ENCODE measurements at regions of chr3 and their contacts with region 1.

Region 1: GRCh38 chr3:47164007-47164881 is at the start of gene SETD2:
- DNase-seq: peak; percentile 43
- ATAC-seq: peak; percentile 93
- H3K4me3 ChIP-seq: peak within 1 kb of the TSS; percentile 83
- H3K27ac ChIP-seq: peak within 1 kb of the TSS; percentile 74
- H3K4me1 ChIP-seq: peaks cover 22% of the 10 kb centered on the region
- H3K27me3 ChIP-seq: no peaks in the 10 kb centered on the region
- CTCF ChIP-seq: peak; percentile 54 to 75 (median 59); a peak in 4 of 6 replicates
- EP300 ChIP-seq: no peak
- POLR2A ChIP-seq: peak; percentile 69
- RAD21 ChIP-seq: peak; percentile 82
- polyA plus RNA-seq, gene SETD2: 8.4 to 8.5 TPM

Region 2: DNA sequence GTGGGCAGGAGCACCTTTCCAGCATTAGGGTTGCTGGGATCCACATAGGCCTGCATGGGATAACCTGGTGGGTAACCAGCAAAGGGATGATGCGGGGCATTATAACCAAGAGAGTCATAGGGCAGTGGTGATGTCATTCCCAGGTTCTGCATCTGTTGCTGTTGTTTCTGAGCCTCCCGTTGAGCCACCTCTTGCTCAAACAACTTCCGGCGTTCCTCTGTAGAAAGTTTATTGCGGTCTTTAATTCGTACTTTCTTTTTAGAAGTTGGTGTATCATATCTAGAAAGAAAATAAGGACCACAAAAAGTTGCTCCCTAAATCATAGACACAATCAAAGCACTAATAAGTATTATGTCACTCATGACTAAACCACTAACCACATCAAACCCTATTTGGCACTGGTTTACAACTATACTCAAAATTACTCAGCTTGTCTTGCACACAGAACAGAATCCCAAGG is 107.0 kb before region 1 on chr3:
- CTCF ChIA-PET with region 1: no interaction called
- POLR2A ChIA-PET with region 1: no interaction called
- RAD21 ChIA-PET with region 1: no interaction called
- SMC1A ChIA-PET with region 1: no interaction called
- in situ Hi-C with region 1: no loop called
- intact Hi-C with region 1: no loop called
- DNase-seq: no peak
- ATAC-seq: peak; percentile 72
- H3K4me3 ChIP-seq: no peak overlapping the region
- H3K27ac ChIP-seq: no peak overlapping the region
- H3K4me1 ChIP-seq: peaks cover 3% of the 10 kb centered on the region; the same call in 1 of the 2 replicates
- H3K27me3 ChIP-seq: no peaks in the 10 kb centered on the region
- CTCF ChIP-seq: no peak
- EP300 ChIP-seq: peak in 1 of 2 experiments; percentile 17; a peak in 1 of 4 replicates
- POLR2A ChIP-seq: no peak
- RAD21 ChIP-seq: no peak

Region 3: DNA sequence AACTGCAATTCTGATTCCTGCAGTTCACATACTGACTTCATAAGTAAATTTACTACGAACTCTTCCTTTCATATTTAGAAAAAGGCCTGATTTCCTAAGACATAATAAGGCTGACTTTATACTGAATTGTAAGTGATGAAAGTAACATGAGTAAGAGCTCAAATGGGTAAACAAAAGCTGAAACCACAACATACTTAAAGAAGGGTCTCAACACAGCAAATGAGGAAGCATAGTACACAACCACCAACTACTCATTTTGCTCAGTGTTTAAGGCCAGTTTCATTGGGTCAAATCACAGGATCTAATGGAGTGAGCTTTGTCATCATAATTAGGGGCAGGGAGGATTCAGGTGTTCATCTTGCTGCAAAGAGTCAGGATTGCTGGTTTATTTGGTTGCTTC is 81.7 kb before region 1 on chr3:
- CTCF ChIA-PET with region 1: interaction called, 5 read pairs
- POLR2A ChIA-PET with region 1: no interaction called
- RAD21 ChIA-PET with region 1: interaction called, 21 read pairs
- SMC1A ChIA-PET with region 1: interaction called, 6 read pairs
- in situ Hi-C with region 1: no loop called
- intact Hi-C with region 1: no loop called
- DNase-seq: peak; percentile 51
- ATAC-seq: peak; percentile 95
- H3K4me3 ChIP-seq: no peak overlapping the region
- H3K27ac ChIP-seq: 0 out of 2 replicates have a peak overlapping the region, but pooled peaks have one; percentile 4
- H3K4me1 ChIP-seq: peaks cover 18% of the 10 kb centered on the region
- H3K27me3 ChIP-seq: no peaks in the 10 kb centered on the region
- CTCF ChIP-seq: no peak
- EP300 ChIP-seq: no peak
- POLR2A ChIP-seq: no peak
- RAD21 ChIP-seq: no peak

Region 4: GRCh38 chr3:47145272-47145671 is 19.0 kb before region 1 on chr3:
- CTCF ChIA-PET with region 1: interaction called, 13 read pairs
- POLR2A ChIA-PET with region 1: interaction called, 10 read pairs
- RAD21 ChIA-PET with region 1: interaction called, 39 read pairs
- SMC1A ChIA-PET with region 1: interaction called, 40 read pairs
- in situ Hi-C with region 1: no loop called
- intact Hi-C with region 1: no loop called
- DNase-seq: no peak
- ATAC-seq: no peak
- H3K4me3 ChIP-seq: no peak overlapping the region
- H3K27ac ChIP-seq: no peak overlapping the region
- H3K4me1 ChIP-seq: peaks cover 18% of the 10 kb centered on the region
- H3K27me3 ChIP-seq: no peaks in the 10 kb centered on the region
- CTCF ChIP-seq: no peak
- EP300 ChIP-seq: no peak
- POLR2A ChIP-seq: no peak
- RAD21 ChIP-seq: no peak

Region 5: GRCh38 chr3:47225310-47225906 is 61.2 kb after region 1 on chr3:
- CTCF ChIA-PET with region 1: interaction called, 18 read pairs
- POLR2A ChIA-PET with region 1: interaction called, 6 read pairs
- RAD21 ChIA-PET with region 1: interaction called, 10 read pairs
- SMC1A ChIA-PET with region 1: interaction called, 7 read pairs
- in situ Hi-C with region 1: no loop called
- intact Hi-C with region 1: no loop called
- DNase-seq: peak; percentile 77
- ATAC-seq: peak; percentile 85
- H3K4me3 ChIP-seq: no peak overlapping the region; the same call in 1 of the 2 replicates
- H3K27ac ChIP-seq: peak overlapping the region; percentile 32; the same call in 1 of the 2 replicates
- H3K4me1 ChIP-seq: peaks cover 46% of the 10 kb centered on the region
- H3K27me3 ChIP-seq: no peaks in the 10 kb centered on the region
- CTCF ChIP-seq: no peak
- EP300 ChIP-seq: peak in 1 of 2 experiments; percentile 95; a peak in 2 of 4 replicates
- POLR2A ChIP-seq: no peak
- RAD21 ChIP-seq: no peak

Region 6: GRCh38 chr3:47291158-47291753 is 127.0 kb after region 1 on chr3:
- CTCF ChIA-PET with region 1: interaction called, 8 read pairs
- POLR2A ChIA-PET with region 1: interaction called, 4 read pairs
- RAD21 ChIA-PET with region 1: interaction called, 14 read pairs
- SMC1A ChIA-PET with region 1: interaction called, 5 read pairs
- in situ Hi-C with region 1: no loop called
- intact Hi-C with region 1: no loop called
- DNase-seq: no peak
- ATAC-seq: peak; percentile 50
- H3K4me3 ChIP-seq: no peak overlapping the region
- H3K27ac ChIP-seq: peak overlapping the region; percentile 61
- H3K4me1 ChIP-seq: peaks cover 40% of the 10 kb centered on the region
- H3K27me3 ChIP-seq: no peaks in the 10 kb centered on the region
- CTCF ChIP-seq: no peak
- EP300 ChIP-seq: no peak
- POLR2A ChIP-seq: no peak
- RAD21 ChIP-seq: no peak

Region 7: GRCh38 chr3:47370887-47371697 is 206.8 kb after region 1 on chr3:
- CTCF ChIA-PET with region 1: interaction called, 5 read pairs
- POLR2A ChIA-PET with region 1: no interaction called
- RAD21 ChIA-PET with region 1: interaction called, 5 read pairs
- SMC1A ChIA-PET with region 1: interaction called, 11 read pairs
- in situ Hi-C with region 1: no loop called
- intact Hi-C with region 1: no loop called
- DNase-seq: no peak
- ATAC-seq: peak; percentile 87
- H3K4me3 ChIP-seq: no peak overlapping the region
- H3K27ac ChIP-seq: no peak overlapping the region
- H3K4me1 ChIP-seq: no peaks in the 10 kb centered on the region
- H3K27me3 ChIP-seq: no peaks in the 10 kb centered on the region
- CTCF ChIP-seq: peak; percentile 34 to 52 (median 43); a peak in 4 of 6 replicates
- EP300 ChIP-seq: no peak
- POLR2A ChIP-seq: no peak
- RAD21 ChIP-seq: peak; percentile 54